Upper lobe of right lung (tissue), 1 donor: ENCODE measurements at regions of chr1 and their contacts with region 1.

Region 1: GRCh38 chr1:23188434-23188884 is 19.8 kb upstream of the LUZP1 start:
- DNase-seq: no peak
- ATAC-seq: no peak
- H3K4me3 ChIP-seq: no peak overlapping the region
- H3K27ac ChIP-seq: no peak overlapping the region
- H3K4me1 ChIP-seq: peaks cover 5% of the 10 kb centered on the region
- H3K27me3 ChIP-seq: no peaks in the 10 kb centered on the region
- CTCF ChIP-seq: no peak

Region 2: DNA sequence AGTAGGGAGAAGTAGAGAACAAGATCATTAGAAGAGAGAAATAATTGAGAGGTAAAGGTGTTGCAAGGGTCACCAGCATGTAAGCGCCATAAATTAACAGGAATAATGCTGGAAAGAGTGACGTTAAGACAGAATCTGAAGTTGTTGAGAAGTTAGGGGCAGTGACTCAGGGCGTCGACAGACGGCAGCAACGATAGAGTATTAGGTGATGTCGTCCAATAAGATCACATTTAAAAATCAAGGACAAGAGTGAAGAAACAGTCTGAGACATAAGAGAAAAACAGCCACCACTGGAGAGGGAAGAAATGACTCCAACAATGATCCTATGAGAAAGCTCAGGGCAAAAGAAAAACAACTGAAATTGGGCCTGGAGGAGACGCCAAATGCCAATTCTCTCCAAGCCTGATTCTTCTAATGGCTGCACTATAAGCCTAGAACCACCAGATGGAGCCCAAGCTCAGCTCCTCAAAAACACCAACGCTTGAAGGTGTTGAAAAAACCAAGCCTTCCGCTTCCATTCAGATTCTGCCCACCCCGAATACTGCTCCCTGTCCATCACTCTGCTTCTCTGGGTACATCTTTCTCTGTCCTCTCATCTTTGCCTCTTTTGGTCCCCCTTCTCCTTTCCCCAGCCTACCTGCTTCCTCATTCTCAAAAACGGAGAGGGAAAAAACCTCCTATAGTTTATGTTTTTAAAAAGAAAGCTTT is 89.8 kb before region 1 on chr1:
- intact Hi-C with region 1: loop called (anchors 5 kb)
- DNase-seq: no peak
- ATAC-seq: peak; percentile 88
- H3K4me3 ChIP-seq: no peak overlapping the region
- H3K27ac ChIP-seq: no peak overlapping the region
- H3K4me1 ChIP-seq: peaks cover 47% of the 10 kb centered on the region
- H3K27me3 ChIP-seq: no peaks in the 10 kb centered on the region
- CTCF ChIP-seq: peak; percentile 87

Region 3: GRCh38 chr1:23459338-23459757 is 270.9 kb after region 1 on chr1:
- intact Hi-C with region 1: no loop called
- DNase-seq: no peak
- ATAC-seq: no peak
- H3K4me3 ChIP-seq: no peak overlapping the region
- H3K27ac ChIP-seq: no peak overlapping the region
- H3K4me1 ChIP-seq: peaks cover 6% of the 10 kb centered on the region
- H3K27me3 ChIP-seq: no peaks in the 10 kb centered on the region
- CTCF ChIP-seq: no peak